ENCODE measurements at regions of chr14 and their contacts with region 1.

Region 1: DNA sequence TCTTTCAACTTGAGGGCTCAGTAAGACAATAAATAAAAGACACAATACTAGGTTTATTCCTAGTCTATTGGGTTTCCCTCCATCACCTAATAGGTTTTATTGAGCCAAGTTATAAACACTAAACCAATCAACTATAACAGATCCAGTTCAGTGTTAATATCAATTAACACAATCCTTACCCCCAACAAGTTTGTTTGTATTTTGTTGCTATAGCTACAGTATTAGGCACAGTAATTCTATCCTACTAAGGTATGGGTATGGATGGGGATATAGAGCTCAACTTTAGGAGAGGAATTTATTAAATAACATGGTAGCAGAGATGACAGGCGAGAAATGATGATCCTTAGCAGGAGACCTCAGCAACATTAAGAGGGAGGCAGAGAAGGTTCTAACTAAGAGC is 13.3 kb downstream of the PPP4R3A start:
- DNase-seq: peak; percentile 41
- ATAC-seq: peak; percentile 78
- H3K4me3 ChIP-seq: no peak overlapping the region
- H3K27ac ChIP-seq: peak overlapping the region; percentile 73
- H3K4me1 ChIP-seq: peaks cover 39% of the 10 kb centered on the region
- H3K27me3 ChIP-seq: no peaks in the 10 kb centered on the region
- CTCF ChIP-seq: no peak
- EP300 ChIP-seq: no peak
- POLR2A ChIP-seq: no peak
- RAD21 ChIP-seq: no peak

Region 2: GRCh38 chr14:91439345-91439744 is 57.4 kb before region 1 on chr14:
- CTCF ChIA-PET with region 1: no interaction called
- POLR2A ChIA-PET with region 1: no interaction called
- in situ Hi-C with region 1: no loop called
- intact Hi-C with region 1: no loop called
- DNase-seq: no peak
- ATAC-seq: peak; percentile 89
- H3K4me3 ChIP-seq: no peak overlapping the region
- H3K27ac ChIP-seq: no peak overlapping the region
- H3K4me1 ChIP-seq: 0 out of 2 replicates have a peak, but pooled peaks cover 6% of the 10 kb centered on the region
- H3K27me3 ChIP-seq: no peaks in the 10 kb centered on the region
- CTCF ChIP-seq: no peak
- EP300 ChIP-seq: no peak
- POLR2A ChIP-seq: no peak
- RAD21 ChIP-seq: no peak

Region 3: GRCh38 chr14:91510174-91511042 is 13.6 kb after region 1 on chr14 and contains the start of gene PPP4R3A:
- CTCF ChIA-PET with region 1: no interaction called
- POLR2A ChIA-PET with region 1: interaction called, 12 read pairs
- in situ Hi-C with region 1: no loop called
- intact Hi-C with region 1: no loop called
- DNase-seq: peak; percentile 86
- ATAC-seq: peak; percentile 89
- H3K4me3 ChIP-seq: peak within 1 kb of the TSS; percentile 75 to 93 (median 85)
- H3K27ac ChIP-seq: peak within 1 kb of the TSS; percentile 99
- H3K4me1 ChIP-seq: peaks cover 25% of the 10 kb centered on the region
- H3K27me3 ChIP-seq: no peaks in the 10 kb centered on the region; a peak in 2 of 5 replicates
- CTCF ChIP-seq: peak; percentile 16; the same call in 1 of the 2 replicates
- EP300 ChIP-seq: no peak
- POLR2A ChIP-seq: peak; percentile 79 to 87
- RAD21 ChIP-seq: peak; percentile 27; the same call in 1 of the 2 replicates
- total RNA-seq, gene PPP4R3A: 57.4 and 89.0 TPM in 2 replicates

Measured in HepG2 (cell line).